ENCODE measurements at regions of chr5 and their contacts with region 1.

Region 1: GRCh38 chr5:157172403-157172802 is 6.3 kb upstream of the GARIN3 start:
- DNase-seq: peak; percentile 96
- ATAC-seq: peak; percentile 93
- H3K4me3 Mint-ChIP-seq: peak overlapping the region; percentile 63
- H3K27ac Mint-ChIP-seq: peak overlapping the region; percentile 94
- H3K4me1 Mint-ChIP-seq: peaks cover 85% of the 10 kb centered on the region
- H3K27me3 Mint-ChIP-seq: no peaks in the 10 kb centered on the region

Region 2: DNA sequence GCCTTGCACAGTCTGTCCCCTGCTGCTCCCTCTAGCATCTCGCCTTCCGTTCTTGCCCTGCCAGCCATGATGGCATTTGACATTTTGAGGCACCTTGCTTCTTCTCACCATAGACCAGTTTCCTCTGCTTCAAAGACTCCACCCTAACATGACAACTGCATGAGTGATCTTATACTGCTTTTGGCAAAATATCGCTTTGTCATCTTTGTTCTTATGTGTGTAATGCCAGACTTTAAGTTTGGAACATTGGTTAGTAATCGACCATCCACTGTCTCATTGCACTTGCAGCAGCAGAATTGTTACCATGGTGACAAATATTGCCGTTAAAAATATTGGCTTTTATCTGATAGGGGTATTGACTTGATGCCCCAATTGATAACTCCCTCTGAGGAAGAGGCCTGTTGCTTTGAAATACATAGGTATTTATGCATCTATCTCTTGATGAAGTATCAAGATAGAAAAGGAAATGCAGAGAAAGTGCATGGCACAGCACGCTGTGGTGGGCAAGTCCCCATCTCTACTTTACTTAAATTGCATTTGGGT is 13.1 kb before region 1 on chr5:
- CTCF ChIA-PET with region 1: interaction called, 5 read pairs
- POLR2A ChIA-PET with region 1: interaction called, 6 read pairs
- intact Hi-C with region 1: loop called (anchors 1 to 2 kb)
- DNase-seq: peak; percentile 66
- ATAC-seq: peak; percentile 81
- H3K4me3 Mint-ChIP-seq: peak overlapping the region; percentile 64
- H3K27ac Mint-ChIP-seq: peak overlapping the region; percentile 99
- H3K4me1 Mint-ChIP-seq: peaks cover 71% of the 10 kb centered on the region
- H3K27me3 Mint-ChIP-seq: no peaks in the 10 kb centered on the region

Region 3: DNA sequence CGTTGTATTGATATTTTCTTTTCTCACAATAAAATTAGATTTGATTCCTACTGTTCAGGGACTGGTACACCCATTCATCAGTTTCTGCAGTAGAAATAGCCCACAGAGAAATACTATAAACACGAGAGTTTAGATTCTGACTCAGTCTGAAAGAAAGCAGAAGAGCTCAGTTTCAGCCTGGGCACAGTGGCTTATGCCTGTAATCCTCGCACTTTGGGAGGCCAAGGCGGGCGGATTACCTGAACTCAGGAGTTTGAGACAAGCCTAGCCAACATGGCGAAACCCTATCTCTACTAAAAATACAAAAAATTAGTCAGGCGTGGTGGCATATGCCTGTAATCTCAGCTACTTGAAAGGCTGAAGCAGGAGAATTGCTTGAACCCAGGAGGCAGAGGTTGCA is 16.8 kb after region 1 on chr5:
- CTCF ChIA-PET with region 1: interaction called, 33 read pairs
- POLR2A ChIA-PET with region 1: interaction called, 5 read pairs
- intact Hi-C with region 1: loop called in 1 of 2 experiments (anchors 2 kb)
- DNase-seq: peak; percentile 71
- ATAC-seq: peak; percentile 59
- H3K4me3 Mint-ChIP-seq: peak overlapping the region; percentile 93
- H3K27ac Mint-ChIP-seq: peak overlapping the region; percentile 96
- H3K4me1 Mint-ChIP-seq: peaks cover 75% of the 10 kb centered on the region
- H3K27me3 Mint-ChIP-seq: no peaks in the 10 kb centered on the region

Region 4: DNA sequence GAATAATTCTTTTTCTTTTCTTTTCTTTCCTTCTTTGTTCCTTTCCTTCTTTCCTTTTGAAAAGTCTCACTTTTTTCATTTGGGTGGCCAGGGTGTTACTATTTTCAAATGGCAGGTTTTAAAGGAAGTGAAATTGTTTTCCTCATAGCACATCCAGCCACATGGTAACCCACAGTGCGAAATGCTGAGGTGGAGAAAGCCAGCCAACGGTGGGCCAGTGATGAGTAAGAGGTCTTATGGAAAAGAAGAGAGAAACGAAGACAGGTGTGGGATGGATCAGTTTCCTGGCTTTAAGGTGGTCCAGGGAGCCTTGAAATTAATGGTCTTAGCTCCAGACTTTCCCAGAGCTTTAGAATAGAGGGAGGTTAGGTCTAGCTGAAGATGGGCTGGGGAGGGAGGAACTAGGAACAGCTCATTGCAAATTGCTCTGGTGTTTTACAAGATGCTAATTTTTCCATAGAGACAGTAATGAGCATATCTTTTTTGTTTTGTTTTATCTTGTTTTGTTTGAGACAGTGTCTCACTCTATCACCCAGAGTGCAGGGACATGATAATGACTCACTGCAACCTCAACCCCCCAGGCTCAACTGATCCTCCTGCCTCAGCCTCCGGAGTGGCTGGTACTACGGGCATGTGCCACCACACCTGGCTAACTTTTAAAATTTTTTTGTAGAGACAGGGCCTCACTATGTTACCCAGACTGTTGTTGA is 26.0 kb after region 1 on chr5:
- CTCF ChIA-PET with region 1: interaction called, 5 read pairs
- POLR2A ChIA-PET with region 1: no interaction called
- intact Hi-C with region 1: loop called in 1 of 2 experiments (anchors 1 kb)
- DNase-seq: peak; percentile 75
- ATAC-seq: peak; percentile 78
- H3K4me3 Mint-ChIP-seq: peak overlapping the region; percentile 66
- H3K27ac Mint-ChIP-seq: peak overlapping the region; percentile 98
- H3K4me1 Mint-ChIP-seq: peaks cover 94% of the 10 kb centered on the region
- H3K27me3 Mint-ChIP-seq: no peaks in the 10 kb centered on the region

Region 5: GRCh38 chr5:157265714-157266285 is 93.4 kb after region 1 on chr5 and contains the start of gene CYFIP2:
- CTCF ChIA-PET with region 1: interaction called, 7 read pairs
- POLR2A ChIA-PET with region 1: no interaction called
- intact Hi-C with region 1: loop called in 1 of 2 experiments (anchors 1 kb)
- DNase-seq: peak; percentile 91
- ATAC-seq: peak; percentile 78
- H3K4me3 Mint-ChIP-seq: peak within 1 kb of the TSS; percentile 96
- H3K27ac Mint-ChIP-seq: peak within 1 kb of the TSS; percentile 98
- H3K4me1 Mint-ChIP-seq: peaks cover 68% of the 10 kb centered on the region
- H3K27me3 Mint-ChIP-seq: no peaks in the 10 kb centered on the region
- total RNA-seq, gene CYFIP2: 277 to 526 TPM